ENCODE measurements at regions of chr2 and their contacts with region 1.

Region 1: GRCh38 chr2:162890690-162891311 is 52.2 kb upstream of the KCNH7 start:
- DNase-seq: peak; percentile 49
- ATAC-seq: peak; percentile 74
- H3K4me3 ChIP-seq: no peak overlapping the region
- H3K27ac ChIP-seq: no peak overlapping the region
- H3K4me1 ChIP-seq: no peaks in the 10 kb centered on the region
- H3K27me3 ChIP-seq: no peaks in the 10 kb centered on the region
- CTCF ChIP-seq: peak; percentile 55 to 85 (median 75); a peak in 5 of 6 replicates
- POLR2A ChIP-seq: no peak
- RAD21 ChIP-seq: peak; percentile 83

Region 2: DNA sequence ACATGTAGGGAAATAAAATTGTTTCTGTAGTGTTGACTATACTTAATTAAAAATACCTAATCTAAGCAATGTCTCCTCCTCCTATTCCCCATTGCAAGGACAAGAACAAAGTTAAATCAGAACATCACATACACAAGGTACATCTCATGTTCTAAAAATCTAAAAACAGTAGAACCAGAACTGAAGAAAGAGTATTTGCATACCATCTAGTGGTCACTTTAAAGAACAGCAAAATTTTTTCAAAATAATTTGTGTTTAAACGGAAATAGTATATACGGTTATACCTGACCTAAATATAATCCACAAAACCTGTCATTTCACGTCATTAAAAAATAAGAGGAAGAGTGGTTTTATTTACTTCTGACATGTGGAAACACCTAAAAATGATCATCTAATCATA is 242.0 kb after region 1 on chr2:
- CTCF ChIA-PET with region 1: interaction called, 4 read pairs
- POLR2A ChIA-PET with region 1: no interaction called
- RAD21 ChIA-PET with region 1: no interaction called
- intact Hi-C with region 1: loop called (anchors 1 kb)
- DNase-seq: peak; percentile 4
- ATAC-seq: no peak
- H3K4me3 ChIP-seq: no peak overlapping the region
- H3K27ac ChIP-seq: no peak overlapping the region
- H3K4me1 ChIP-seq: no peaks in the 10 kb centered on the region
- H3K27me3 ChIP-seq: no peaks in the 10 kb centered on the region; the same call in 1 of the 2 replicates
- CTCF ChIP-seq: peak; percentile 32 to 62 (median 38); a peak in 4 of 6 replicates
- POLR2A ChIP-seq: no peak
- RAD21 ChIP-seq: peak; percentile 62